ENCODE measurements at regions of chr6 and their contacts with region 1.

Region 1: DNA sequence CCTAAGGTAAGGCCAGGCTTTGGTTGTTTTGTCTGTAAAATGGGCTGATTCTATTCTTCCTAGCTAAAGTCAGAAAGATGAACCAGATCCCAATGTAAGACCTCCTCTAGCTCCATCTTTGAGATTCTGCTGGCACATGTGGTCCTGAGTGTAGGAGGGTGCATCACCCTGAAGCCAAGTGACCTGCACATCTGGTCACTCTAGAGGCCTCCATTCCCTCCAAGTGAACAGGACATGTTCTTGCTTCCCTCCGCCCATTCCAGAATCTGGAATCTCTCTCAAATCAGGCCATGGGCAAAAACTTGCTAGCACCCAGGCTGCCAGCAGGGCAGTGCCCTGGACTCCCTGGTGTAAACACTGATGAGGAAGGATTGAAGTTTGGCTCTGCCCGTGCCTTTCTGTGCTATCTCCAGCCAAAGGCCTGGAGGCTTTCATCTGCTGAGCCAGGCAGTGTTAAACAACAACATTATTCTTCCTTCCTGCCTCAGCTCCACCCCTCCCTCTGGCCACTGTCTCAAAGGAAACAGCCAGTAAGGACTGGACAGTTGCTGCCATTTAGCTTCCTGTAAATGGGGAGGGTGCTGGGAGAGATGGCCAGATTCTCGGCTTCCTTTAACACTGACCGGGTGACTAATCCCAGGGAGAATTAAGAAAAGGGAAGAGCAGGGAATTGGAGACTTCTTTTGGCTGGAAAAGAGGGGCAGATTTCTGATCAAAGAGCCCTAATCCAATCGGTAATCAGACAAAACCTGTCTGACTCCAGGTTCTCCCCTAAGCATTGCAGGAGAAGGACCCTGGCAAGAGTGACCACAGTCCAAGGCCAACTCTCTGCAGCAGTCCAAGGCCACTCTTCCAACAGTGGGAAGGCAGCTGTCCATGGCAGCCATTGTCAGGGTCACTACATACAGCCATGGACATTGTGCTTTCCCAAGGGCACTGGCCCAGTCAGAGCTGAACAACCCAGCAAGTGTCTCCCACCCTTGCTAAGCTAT is 19.5 kb upstream of the ADGRF1 start:
- DNase-seq: no peak
- H3K4me3 ChIP-seq: no peak overlapping the region
- H3K4me3 Mint-ChIP-seq: no peak overlapping the region
- H3K27ac ChIP-seq: no peak overlapping the region
- H3K27ac Mint-ChIP-seq: peak overlapping the region in 1 of 7 donors; percentile 1
- H3K4me1 ChIP-seq: no peaks in the 10 kb centered on the region
- H3K4me1 Mint-ChIP-seq: peaks cover 11% of the 10 kb centered on the region
- H3K27me3 ChIP-seq: no peaks in the 10 kb centered on the region
- H3K27me3 Mint-ChIP-seq: no peaks in the 10 kb centered on the region
- CTCF ChIP-seq: no peak

Region 2: DNA sequence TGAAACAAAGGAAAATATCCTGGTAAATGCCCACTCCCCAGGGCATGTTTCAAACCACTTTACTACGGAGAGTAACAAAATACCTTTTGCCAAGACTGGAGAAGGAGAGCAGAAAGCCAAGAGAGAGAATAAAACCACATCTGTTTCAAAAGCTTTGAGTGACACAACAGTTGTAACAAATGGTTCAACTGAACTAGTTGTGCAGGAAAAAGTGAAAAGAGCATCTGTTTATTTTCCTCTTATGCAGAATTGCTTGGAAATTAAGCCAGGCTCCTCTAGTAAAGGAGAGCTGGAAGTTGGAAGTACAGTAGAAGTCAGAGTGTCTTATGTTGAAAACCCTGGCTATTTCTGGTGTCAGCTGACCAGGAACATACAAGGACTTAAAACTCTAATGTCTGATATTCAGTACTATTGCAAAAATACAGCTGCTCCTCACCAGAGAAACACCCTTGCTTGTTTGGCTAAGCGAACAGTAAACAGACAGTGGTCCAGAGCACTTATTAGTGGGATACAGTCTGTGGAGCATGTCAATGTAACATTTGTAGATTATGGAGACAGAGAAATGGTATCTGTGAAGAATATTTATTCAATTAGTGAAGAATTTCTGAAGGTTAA is 371.4 kb before region 1 on chr6:
- intact Hi-C with region 1: loop called in 1 of 2 experiments (anchors 5 kb)
- DNase-seq: no peak
- H3K4me3 ChIP-seq: no peak overlapping the region
- H3K4me3 Mint-ChIP-seq: no peak overlapping the region
- H3K27ac ChIP-seq: no peak overlapping the region
- H3K27ac Mint-ChIP-seq: no peak overlapping the region
- H3K4me1 ChIP-seq: no peaks in the 10 kb centered on the region
- H3K4me1 Mint-ChIP-seq: no peaks in the 10 kb centered on the region
- H3K27me3 ChIP-seq: no peaks in the 10 kb centered on the region
- H3K27me3 Mint-ChIP-seq: peaks cover 0 to 3% (median 0%) of the 10 kb centered on the region in 3 donors
- CTCF ChIP-seq: no peak

Measured in CD14-positive monocyte (primary cell).